Endothelial cell of umbilical vein (primary cell): ENCODE measurements at regions of chr14 and their contacts with region 1.

Region 1: DNA sequence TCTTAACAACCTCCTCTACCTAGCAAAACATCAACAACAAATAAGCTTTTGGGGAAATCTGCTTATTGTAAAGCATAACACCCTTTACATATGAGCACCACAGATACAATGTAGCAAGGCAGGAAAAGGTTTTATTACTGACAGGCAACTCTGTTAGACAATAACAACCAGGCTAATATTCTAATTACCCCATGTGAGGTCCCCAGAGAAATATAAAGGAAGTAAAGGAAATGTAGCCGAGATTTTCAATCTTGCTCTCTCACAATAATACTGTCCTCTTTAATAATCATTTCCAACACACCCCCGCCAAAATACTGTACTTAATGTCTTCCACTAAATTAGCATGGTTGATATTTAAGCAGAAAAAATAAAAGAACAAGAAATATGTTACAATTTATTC is 14.0 kb upstream of the INSM2 start:
- DNase-seq: no peak
- H3K4me3 ChIP-seq: no peak overlapping the region
- H3K27ac ChIP-seq: no peak overlapping the region
- H3K4me1 ChIP-seq: no peaks in the 10 kb centered on the region
- H3K27me3 ChIP-seq: no peaks in the 10 kb centered on the region
- CTCF ChIP-seq: no peak
- POLR2A ChIP-seq: no peak

Region 2: DNA sequence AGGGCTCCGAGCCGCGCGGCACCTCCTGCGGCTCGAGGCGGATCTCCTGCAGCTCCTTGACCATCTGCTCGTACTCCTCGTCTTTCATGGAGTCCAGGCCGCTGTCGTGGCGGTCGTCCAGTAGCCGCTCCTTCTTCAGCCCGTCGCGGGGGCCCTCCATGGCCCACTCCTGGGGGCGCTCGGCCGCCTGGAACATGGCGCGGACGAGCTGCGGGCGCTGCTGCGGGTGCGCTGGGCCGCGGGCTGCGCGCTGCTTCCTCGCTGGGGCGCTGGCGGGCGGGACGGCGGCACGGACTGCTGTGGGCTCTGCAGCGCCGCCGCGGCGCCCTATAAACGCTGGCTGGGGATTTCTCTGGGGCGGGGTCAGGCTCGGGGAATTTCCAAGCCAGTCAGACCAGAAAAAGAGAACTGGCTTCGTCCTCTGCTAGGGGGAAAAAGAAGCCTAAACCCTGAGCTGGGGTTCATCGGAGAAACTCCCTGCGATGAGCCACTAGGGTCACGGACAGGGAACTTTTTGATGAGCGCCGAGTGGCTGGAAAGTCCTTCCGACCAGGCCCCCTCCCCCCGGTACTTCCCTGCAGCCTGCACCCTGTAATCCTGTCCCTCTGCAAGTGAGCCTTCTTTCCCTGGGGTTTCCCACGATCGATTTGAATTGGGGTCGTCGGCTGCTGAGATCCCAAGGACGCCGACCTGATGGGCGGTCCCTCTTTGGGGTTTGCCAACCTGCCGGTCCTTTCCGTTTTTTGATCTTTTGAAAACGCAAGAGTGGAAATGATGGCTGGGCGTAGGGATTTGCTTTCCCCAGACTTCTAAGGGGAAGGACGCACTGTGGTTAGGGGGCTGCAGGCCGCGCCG is 115.3 kb before region 1 on chr14 and contains the start of gene NFKBIA:
- CTCF ChIA-PET with region 1: no interaction called
- POLR2A ChIA-PET with region 1: no interaction called
- dilution Hi-C with region 1: no loop called
- intact Hi-C with region 1: no loop called
- DNase-seq: peak; percentile 90
- H3K4me3 ChIP-seq: peak within 1 kb of the TSS; percentile 74 to 89 (median 76)
- H3K27ac ChIP-seq: peak within 1 kb of the TSS; percentile 97
- H3K4me1 ChIP-seq: peaks cover 45% of the 10 kb centered on the region
- H3K27me3 ChIP-seq: no peaks in the 10 kb centered on the region
- CTCF ChIP-seq: peak; percentile 18 to 28
- POLR2A ChIP-seq: peak; percentile 90
- total RNA-seq, gene NFKBIA: 52.5 and 55.7 TPM in 2 replicates

Region 3: DNA sequence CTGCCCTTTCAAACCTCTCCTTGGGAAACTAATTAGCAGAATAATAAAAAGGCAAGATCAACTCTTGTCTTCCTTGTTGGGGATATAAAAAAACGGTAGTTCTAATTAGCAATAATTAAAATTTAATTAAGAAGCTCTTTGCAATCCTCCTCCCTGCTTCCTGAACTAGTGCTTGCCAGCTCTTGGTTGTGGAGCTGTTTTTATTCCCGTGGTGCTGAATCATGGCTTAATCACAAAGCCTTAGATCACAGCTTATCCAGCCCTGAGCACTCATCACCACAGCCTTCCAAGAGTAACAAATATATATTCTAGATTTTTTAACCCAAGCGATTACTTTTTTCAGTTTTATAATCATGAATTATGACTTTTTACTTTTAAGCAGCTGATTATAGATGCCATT is 49.2 kb before region 1 on chr14:
- CTCF ChIA-PET with region 1: no interaction called
- POLR2A ChIA-PET with region 1: no interaction called
- dilution Hi-C with region 1: no loop called
- intact Hi-C with region 1: loop called (anchors 10 kb)
- DNase-seq: peak; percentile 13
- H3K4me3 ChIP-seq: no peak overlapping the region
- H3K27ac ChIP-seq: no peak overlapping the region
- H3K4me1 ChIP-seq: no peaks in the 10 kb centered on the region
- H3K27me3 ChIP-seq: peaks cover 0 to 8% of the 10 kb centered on the region in 2 experiments
- CTCF ChIP-seq: no peak
- POLR2A ChIP-seq: no peak